Endothelial cell of umbilical vein (primary cell): ENCODE measurements at regions of chr22 and their contacts with region 1.

Region 1: DNA sequence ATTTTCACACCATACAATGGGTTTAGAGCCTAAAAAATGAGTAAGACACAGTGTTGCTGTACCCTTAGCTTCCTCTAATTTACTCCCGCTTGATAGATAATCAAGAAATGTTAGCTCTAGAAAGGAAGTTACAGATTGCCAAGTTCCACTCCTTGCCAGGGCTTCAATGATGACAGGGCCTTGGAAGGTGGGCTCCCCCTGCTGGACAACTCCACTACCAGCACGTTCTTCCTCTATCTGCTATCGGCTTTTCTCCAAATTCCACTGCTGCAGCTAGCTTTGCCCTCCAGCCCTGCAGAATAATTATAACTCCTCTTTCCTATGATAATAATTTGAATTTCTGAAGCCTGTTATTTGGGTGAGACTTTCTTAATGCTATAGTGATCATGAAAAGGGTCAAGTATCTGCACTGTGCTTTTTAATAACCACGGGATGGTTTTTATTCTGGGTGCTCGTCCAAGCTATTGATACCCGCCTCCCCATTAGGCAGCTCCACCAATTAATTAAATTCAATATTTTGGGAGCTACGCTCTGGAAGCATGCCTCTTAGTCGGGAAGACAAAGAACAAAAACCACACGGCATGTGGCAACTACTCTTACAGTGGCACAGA is 9.0 kb downstream of the SYN3 start:
- DNase-seq: peak; percentile 30
- H3K4me3 ChIP-seq: no peak overlapping the region
- H3K27ac ChIP-seq: no peak overlapping the region
- H3K4me1 ChIP-seq: no peaks in the 10 kb centered on the region
- H3K27me3 ChIP-seq: no peaks in the 10 kb centered on the region
- CTCF ChIP-seq: peak; percentile 78 to 89
- POLR2A ChIP-seq: no peak

Region 2: GRCh38 chr22:33018232-33018864 is 30.9 kb before region 1 on chr22:
- CTCF ChIA-PET with region 1: no interaction called
- POLR2A ChIA-PET with region 1: no interaction called
- dilution Hi-C with region 1: no loop called
- intact Hi-C with region 1: loop called (anchors 1 kb)
- DNase-seq: peak; percentile 26
- H3K4me3 ChIP-seq: no peak overlapping the region
- H3K27ac ChIP-seq: no peak overlapping the region
- H3K4me1 ChIP-seq: no peaks in the 10 kb centered on the region
- H3K27me3 ChIP-seq: no peaks in the 10 kb centered on the region
- CTCF ChIP-seq: peak; percentile 69 to 81
- POLR2A ChIP-seq: no peak